Spleen (tissue), 13 donors: ENCODE measurements at regions of chr12 and their contacts with region 1.

Region 1: DNA sequence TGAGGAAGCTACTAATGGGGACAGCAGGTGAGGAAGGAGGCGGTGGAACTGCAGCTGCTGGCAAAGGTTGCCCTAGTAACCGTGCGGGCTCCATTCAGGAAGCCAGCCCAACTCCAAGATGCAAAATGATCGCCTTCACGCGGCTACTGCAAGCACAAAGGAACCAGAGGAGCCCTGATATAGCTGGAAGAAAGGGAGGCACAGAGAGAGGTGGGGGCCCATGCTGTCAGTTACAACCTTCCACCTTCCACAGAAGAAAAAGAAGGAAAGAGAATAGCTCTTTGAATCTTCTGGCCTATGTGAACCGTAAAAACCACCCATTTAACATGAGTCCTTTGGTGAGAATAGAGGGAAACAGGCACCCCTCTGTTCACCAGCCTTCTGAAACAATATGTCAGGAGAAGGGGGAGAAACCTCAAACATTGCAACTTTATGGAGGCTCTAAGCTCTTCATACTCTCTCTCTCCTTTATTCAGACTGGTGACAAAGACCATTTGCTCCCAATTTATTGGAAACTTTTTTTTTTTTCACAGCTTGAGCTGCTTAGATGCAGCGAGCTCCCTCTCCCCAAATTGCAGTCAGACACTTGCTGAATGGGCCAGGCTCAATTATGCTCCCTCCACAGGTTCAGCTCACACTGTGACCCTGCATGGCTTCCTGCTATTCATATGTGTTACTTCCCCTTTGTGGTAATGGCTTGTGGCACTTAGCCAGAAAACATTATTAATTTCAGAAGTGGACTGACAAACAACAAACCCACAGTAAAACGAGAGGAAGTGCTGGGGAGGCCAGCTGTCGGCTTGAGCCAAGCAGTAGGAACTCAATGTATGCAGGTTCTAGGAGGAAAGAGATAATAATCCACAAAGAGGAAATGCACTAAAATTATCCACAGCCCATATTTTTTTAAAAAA is 6.2 kb downstream of the DUSP6 start:
- DNase-seq: peak; percentile 88
- H3K4me3 ChIP-seq: peak overlapping the region in 7 of 8 donors; percentile 0 to 85 (median 79)
- H3K27ac ChIP-seq: peak overlapping the region; percentile 59 to 100 (median 98)
- H3K4me1 ChIP-seq: peaks cover 48 to 78% (median 67%) of the 10 kb centered on the region in 6 donors
- H3K27me3 ChIP-seq: no peaks in the 10 kb centered on the region
- CTCF ChIP-seq: peak in 5 of 11 experiments; percentile 3 to 20 (median 19)
- POLR2A ChIP-seq: no peak

Region 2: GRCh38 chr12:89156862-89157262 is 189.2 kb before region 1 on chr12:
- intact Hi-C with region 1: loop called (anchors 5 kb)
- DNase-seq: no peak
- H3K4me3 ChIP-seq: peak overlapping the region in 1 of 8 donors; percentile 30
- H3K27ac ChIP-seq: peak overlapping the region in 7 of 8 donors; percentile 74 to 90 (median 82)
- H3K4me1 ChIP-seq: peaks cover 28 to 70% (median 52%) of the 10 kb centered on the region in 6 donors
- H3K27me3 ChIP-seq: no peaks in the 10 kb centered on the region
- CTCF ChIP-seq: no peak
- POLR2A ChIP-seq: no peak

Region 3: DNA sequence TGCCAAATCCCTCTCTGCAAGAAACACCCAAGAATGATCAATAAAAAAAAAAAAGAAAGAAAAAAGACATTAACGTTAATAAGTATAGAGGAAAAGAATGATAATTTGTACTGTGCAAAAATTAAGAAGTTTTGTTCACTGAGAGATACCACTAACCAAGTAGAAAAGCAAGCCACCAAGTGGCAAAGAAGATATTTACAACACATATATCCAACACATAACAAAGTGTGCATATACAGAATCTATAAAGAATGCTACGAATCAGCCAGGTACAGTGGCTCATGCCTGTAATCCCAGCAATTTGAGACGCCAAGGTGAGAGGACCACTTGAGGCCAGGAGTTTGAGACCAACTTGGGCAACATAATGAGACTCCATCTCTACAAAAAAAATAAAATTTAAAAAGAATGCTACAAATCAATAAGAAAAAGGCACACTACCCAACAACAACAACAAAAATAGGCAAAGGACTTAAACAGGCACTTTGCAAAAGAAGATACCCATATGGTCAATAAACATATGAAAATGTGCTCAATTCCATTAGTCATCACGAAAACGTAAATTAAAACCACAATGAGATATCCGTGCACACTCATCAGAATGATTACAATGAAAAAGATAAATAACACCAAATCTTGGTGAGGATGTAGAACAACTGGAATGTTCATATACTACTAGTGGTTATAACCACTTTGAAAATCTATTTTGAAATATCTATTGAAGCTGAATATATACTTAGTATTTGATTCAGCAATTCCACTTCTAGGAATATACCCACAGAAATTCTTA is 158.7 kb after region 1 on chr12:
- intact Hi-C with region 1: no loop called
- DNase-seq: no peak
- H3K4me3 ChIP-seq: no peak overlapping the region
- H3K27ac ChIP-seq: no peak overlapping the region
- H3K4me1 ChIP-seq: no peaks in the 10 kb centered on the region
- H3K27me3 ChIP-seq: no peaks in the 10 kb centered on the region
- CTCF ChIP-seq: no peak
- POLR2A ChIP-seq: no peak